ENCODE measurements at regions of chr7 and their contacts with region 1.

Region 1: GRCh38 chr7:50369143-50370026 is 64.9 kb downstream of the IKZF1 start:
- DNase-seq: peak; percentile 70 to 81 (median 79)
- H3K4me3 ChIP-seq: no peak overlapping the region
- H3K4me3 Mint-ChIP-seq: peak overlapping the region; percentile 44 to 84 (median 67)
- H3K27ac ChIP-seq: peak overlapping the region; percentile 57
- H3K27ac Mint-ChIP-seq: peak overlapping the region in 6 of 7 donors; percentile 76 to 98 (median 92)
- H3K4me1 ChIP-seq: peaks cover 100% of the 10 kb centered on the region
- H3K4me1 Mint-ChIP-seq: peaks cover 78 to 97% (median 93%) of the 10 kb centered on the region in 4 donors
- H3K27me3 ChIP-seq: no peaks in the 10 kb centered on the region
- H3K27me3 Mint-ChIP-seq: no peaks in the 10 kb centered on the region

Region 2: DNA sequence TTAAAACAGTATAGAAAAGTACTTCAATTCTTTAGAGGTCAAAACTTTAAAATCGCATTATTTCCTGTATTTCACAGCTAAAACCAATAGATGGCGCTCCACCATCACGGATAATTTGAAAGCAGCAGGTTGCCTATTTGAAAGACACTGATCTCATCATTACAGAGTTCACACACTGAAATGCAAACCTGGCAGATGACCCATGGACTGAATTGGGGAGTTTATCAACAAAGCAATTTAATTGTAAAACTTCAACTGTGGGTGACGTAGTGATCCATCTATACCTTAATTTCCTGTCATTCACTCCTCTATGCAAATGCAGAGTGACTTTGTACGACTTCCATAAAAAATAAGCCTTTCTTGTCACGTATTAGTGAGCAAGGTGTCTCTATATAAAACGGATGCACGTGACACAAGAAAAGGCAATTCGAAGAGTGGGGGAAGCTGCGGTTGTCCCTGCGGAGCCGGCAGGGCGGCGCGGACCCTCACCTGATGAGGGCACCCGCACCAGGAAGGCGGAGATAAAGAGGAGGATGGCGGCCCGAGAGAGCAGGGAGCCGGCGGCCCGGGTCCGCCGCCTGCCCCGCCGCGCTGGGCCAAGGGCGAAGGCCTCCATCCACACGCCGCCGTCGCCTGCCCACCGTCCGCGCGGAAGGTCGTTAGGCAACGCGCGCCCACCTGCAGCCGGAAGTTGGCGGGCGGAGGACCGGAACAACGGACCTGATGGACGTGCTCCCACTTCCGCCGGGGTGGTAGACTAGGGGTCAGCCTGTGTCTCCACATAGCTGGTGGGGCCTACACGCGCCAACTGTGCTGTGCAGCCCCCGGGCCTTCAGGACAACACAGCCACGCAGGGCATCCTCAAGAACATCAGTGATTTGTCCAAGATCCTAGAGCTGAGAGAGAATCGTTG is 276.6 kb before region 1 on chr7 and contains the start of gene ZPBP:
- CTCF ChIA-PET with region 1: interaction called, 10 read pairs
- POLR2A ChIA-PET with region 1: no interaction called
- intact Hi-C with region 1: loop called (anchors 1 kb)
- DNase-seq: peak; percentile 62 to 72 (median 69)
- H3K4me3 ChIP-seq: peak within 1 kb of the TSS; percentile 44 to 66
- H3K4me3 Mint-ChIP-seq: peak within 1 kb of the TSS; percentile 88 to 95 (median 88)
- H3K27ac ChIP-seq: peak within 1 kb of the TSS; percentile 23
- H3K27ac Mint-ChIP-seq: peak within 1 kb of the TSS; percentile 45 to 88 (median 80)
- H3K4me1 ChIP-seq: peaks cover 4% of the 10 kb centered on the region
- H3K4me1 Mint-ChIP-seq: peaks cover 4 to 7% (median 7%) of the 10 kb centered on the region in 4 donors
- H3K27me3 ChIP-seq: no peaks in the 10 kb centered on the region
- H3K27me3 Mint-ChIP-seq: no peaks in the 10 kb centered on the region
- total RNA-seq, gene ZPBP: not detected

Region 3: DNA sequence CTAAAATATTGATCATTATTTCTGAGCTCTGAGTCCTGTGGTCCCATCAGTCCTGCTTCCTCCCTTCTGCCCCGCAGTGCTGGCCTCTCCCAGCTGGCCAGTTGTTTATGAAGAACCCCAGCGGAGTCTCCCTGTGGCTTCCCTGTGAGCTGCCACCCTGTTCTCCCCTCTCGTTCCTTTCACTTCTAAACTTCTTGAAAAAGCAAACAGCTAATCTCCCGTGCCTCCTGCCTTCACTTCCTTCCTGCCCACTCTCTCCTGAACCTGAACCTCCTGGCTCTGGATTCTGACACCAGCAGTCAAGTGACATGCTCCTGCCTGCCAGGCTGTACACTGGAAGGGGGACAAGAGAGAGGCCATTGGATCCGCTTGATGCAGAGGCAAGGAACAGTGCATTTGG is 212.7 kb before region 1 on chr7:
- CTCF ChIA-PET with region 1: no interaction called
- POLR2A ChIA-PET with region 1: no interaction called
- intact Hi-C with region 1: no loop called
- DNase-seq: no peak
- H3K4me3 ChIP-seq: no peak overlapping the region
- H3K4me3 Mint-ChIP-seq: peak overlapping the region; percentile 17 to 87 (median 66)
- H3K27ac ChIP-seq: no peak overlapping the region
- H3K27ac Mint-ChIP-seq: peak overlapping the region; percentile 67 to 89 (median 87)
- H3K4me1 ChIP-seq: peaks cover 18% of the 10 kb centered on the region
- H3K4me1 Mint-ChIP-seq: peaks cover 16 to 28% (median 25%) of the 10 kb centered on the region in 4 donors
- H3K27me3 ChIP-seq: no peaks in the 10 kb centered on the region
- H3K27me3 Mint-ChIP-seq: no peaks in the 10 kb centered on the region

Region 4: GRCh38 chr7:50212666-50213621 is 156.4 kb before region 1 on chr7:
- CTCF ChIA-PET with region 1: interaction called, 424 read pairs
- POLR2A ChIA-PET with region 1: interaction called, 151 read pairs
- intact Hi-C with region 1: no loop called
- DNase-seq: peak in 1 of 5 donors; percentile 36
- H3K4me3 ChIP-seq: no peak overlapping the region
- H3K4me3 Mint-ChIP-seq: peak overlapping the region in 7 of 8 donors; percentile 29 to 81 (median 72)
- H3K27ac ChIP-seq: no peak overlapping the region
- H3K27ac Mint-ChIP-seq: peak overlapping the region; percentile 16 to 94 (median 60)
- H3K4me1 ChIP-seq: peaks cover 89% of the 10 kb centered on the region
- H3K4me1 Mint-ChIP-seq: peaks cover 63 to 99% (median 83%) of the 10 kb centered on the region in 4 donors
- H3K27me3 ChIP-seq: no peaks in the 10 kb centered on the region
- H3K27me3 Mint-ChIP-seq: no peaks in the 10 kb centered on the region

Region 5: DNA sequence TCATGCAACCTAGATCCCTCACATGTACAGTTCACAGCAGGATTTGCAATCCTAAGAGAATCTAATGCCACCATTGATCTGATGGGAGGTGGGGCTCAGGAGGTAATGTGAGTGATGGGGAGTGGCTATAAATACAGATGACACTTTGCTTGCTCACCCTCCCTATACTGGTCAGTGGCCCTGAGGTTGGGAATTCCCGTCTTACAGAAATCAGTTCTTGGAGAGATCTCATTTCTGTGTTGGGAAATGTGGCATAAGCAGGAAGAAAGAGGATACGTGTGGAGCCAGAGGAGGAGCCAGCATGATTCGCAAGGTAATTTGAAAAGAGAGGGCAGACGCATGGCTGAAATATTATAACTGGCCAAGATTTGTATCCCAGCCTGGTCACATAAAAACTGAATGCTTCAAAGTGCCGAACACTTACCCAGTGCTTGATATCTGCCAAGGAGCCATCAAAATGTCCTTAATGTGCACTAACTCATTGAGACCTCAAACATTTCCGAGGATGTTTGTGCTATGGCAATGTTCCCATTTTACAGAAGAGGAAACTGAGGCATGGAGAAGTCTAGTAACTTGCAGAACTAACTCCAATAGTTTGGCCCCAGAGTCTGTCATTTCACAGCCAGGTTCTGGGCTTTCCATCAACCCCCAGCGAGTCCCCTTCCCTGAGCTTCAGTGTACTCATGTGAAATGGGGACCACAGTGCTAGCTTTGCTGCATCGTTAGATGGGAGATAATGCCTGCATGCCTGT is 70.4 kb before region 1 on chr7:
- CTCF ChIA-PET with region 1: interaction called, 336 read pairs
- POLR2A ChIA-PET with region 1: interaction called, 2,673 read pairs
- intact Hi-C with region 1: no loop called
- DNase-seq: no peak
- H3K4me3 ChIP-seq: no peak overlapping the region
- H3K4me3 Mint-ChIP-seq: no peak overlapping the region
- H3K27ac ChIP-seq: no peak overlapping the region
- H3K27ac Mint-ChIP-seq: peak overlapping the region in 2 of 7 donors; percentile 5 to 63
- H3K4me1 ChIP-seq: peaks cover 40% of the 10 kb centered on the region
- H3K4me1 Mint-ChIP-seq: peaks cover 27 to 67% (median 50%) of the 10 kb centered on the region in 4 donors
- H3K27me3 ChIP-seq: no peaks in the 10 kb centered on the region
- H3K27me3 Mint-ChIP-seq: no peaks in the 10 kb centered on the region

Region 6: GRCh38 chr7:50317221-50317678 is 52.1 kb before region 1 on chr7:
- CTCF ChIA-PET with region 1: interaction called, 336 read pairs
- POLR2A ChIA-PET with region 1: interaction called, 2,673 read pairs
- intact Hi-C with region 1: loop called (anchors 1 kb)
- DNase-seq: peak; percentile 78 to 89 (median 84)
- H3K4me3 ChIP-seq: peak overlapping the region in 1 of 2 donors; percentile 53
- H3K4me3 Mint-ChIP-seq: peak overlapping the region; percentile 78 to 100 (median 92)
- H3K27ac ChIP-seq: peak overlapping the region; percentile 90
- H3K27ac Mint-ChIP-seq: peak overlapping the region in 6 of 7 donors; percentile 93 to 99 (median 98)
- H3K4me1 ChIP-seq: peaks cover 99% of the 10 kb centered on the region
- H3K4me1 Mint-ChIP-seq: peaks cover 73 to 100% (median 86%) of the 10 kb centered on the region in 4 donors
- H3K27me3 ChIP-seq: no peaks in the 10 kb centered on the region
- H3K27me3 Mint-ChIP-seq: no peaks in the 10 kb centered on the region

Region 7: DNA sequence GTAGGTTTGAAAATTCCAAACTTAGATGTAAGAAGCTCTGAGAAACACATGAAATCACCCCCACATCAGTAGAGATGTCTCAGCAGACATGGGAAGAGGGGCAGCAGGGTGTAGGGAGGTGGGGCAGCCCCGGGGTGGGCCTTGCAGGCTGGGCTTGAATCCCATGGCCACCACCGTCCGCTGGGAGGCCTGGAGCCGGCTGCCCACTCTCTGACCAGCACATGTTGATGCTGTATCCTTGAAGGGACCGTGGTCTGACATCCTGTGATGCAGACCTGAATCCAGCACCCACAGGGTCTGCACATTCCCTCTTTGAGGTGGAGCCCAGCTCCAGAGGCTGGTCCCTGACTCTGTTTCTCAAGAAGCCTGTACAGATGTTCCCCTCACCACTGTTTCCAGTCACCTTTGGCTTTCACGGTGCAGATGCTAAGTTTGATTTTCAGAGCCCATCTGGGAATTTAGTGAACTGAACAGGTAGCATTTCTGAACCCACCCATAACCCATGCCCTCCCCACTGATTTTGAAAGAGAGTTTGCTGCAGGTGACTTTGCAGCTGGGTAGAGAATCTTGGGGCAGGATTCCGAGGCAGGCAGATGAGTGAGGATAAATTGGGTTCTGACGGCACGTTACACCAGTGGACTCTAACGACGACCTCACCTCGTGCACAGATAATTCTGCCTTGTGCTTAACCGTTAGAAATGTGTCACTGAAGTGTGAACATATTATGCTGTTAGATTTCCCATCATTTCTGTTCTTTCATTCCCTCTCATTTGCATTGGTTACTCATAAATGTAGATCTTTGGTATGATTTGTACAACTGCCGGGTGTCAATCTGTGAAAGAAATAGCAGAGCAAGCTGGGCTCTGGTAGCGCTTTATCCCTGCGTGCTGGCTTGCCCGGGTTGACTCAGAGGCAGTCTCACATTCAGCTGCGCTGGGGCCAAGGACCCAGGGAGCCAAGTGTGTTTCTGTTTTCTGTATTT is 19.1 kb before region 1 on chr7:
- CTCF ChIA-PET with region 1: interaction called, 68 read pairs
- POLR2A ChIA-PET with region 1: interaction called, 1,029 read pairs
- intact Hi-C with region 1: no loop called
- DNase-seq: peak; percentile 46 to 89 (median 52)
- H3K4me3 ChIP-seq: peak overlapping the region in 1 of 2 donors; percentile 29
- H3K4me3 Mint-ChIP-seq: peak overlapping the region; percentile 69 to 88 (median 78)
- H3K27ac ChIP-seq: peak overlapping the region; percentile 96
- H3K27ac Mint-ChIP-seq: peak overlapping the region in 6 of 7 donors; percentile 97 to 100 (median 98)
- H3K4me1 ChIP-seq: peaks cover 100% of the 10 kb centered on the region
- H3K4me1 Mint-ChIP-seq: peaks cover 79 to 98% (median 92%) of the 10 kb centered on the region in 4 donors
- H3K27me3 ChIP-seq: no peaks in the 10 kb centered on the region
- H3K27me3 Mint-ChIP-seq: no peaks in the 10 kb centered on the region

Measured in CD4-positive, alpha-beta memory T cell (primary cell).